ENCODE measurements at regions of chr3 and their contacts with region 1.

Region 1: GRCh38 chr3:8607234-8608040 is 37.2 kb downstream of the SSUH2 start:
- H3K4me3 Mint-ChIP-seq: no peak overlapping the region
- H3K27ac Mint-ChIP-seq: no peak overlapping the region
- H3K4me1 Mint-ChIP-seq: peaks cover 24% of the 10 kb centered on the region
- H3K27me3 Mint-ChIP-seq: peaks cover 18% of the 10 kb centered on the region

Region 2: DNA sequence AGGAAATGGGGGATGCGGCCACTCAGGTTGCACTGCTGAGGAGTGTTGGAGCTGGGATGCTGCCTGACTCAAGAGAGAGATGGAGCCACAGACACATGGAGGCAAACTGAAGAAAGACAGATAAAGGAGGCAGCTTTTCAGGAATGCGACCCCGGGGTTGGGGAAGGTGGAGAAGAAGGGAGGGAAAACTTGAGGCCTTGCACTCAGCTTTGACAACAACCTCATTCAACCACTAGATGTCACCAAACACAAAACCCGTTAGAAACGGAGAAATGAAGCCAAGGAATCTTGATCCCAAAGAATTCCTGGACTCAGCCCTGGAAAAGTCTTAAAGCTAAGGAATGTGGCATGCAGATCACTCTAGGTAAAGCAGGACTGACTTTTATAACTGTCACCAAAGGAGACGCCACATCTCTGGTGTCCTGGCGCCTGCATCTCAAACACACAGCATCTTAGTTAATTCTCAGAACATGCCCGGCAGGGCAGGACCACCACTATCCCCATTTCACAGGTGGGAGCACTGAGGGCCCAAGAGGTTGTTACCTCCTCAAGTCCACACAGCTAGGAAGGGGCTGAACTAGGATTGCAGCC is 165.4 kb before region 1 on chr3:
- intact Hi-C with region 1: loop called (anchors 1 kb)
- H3K4me3 Mint-ChIP-seq: no peak overlapping the region
- H3K27ac Mint-ChIP-seq: no peak overlapping the region
- H3K4me1 Mint-ChIP-seq: no peaks in the 10 kb centered on the region
- H3K27me3 Mint-ChIP-seq: peaks cover 2% of the 10 kb centered on the region

Region 3: DNA sequence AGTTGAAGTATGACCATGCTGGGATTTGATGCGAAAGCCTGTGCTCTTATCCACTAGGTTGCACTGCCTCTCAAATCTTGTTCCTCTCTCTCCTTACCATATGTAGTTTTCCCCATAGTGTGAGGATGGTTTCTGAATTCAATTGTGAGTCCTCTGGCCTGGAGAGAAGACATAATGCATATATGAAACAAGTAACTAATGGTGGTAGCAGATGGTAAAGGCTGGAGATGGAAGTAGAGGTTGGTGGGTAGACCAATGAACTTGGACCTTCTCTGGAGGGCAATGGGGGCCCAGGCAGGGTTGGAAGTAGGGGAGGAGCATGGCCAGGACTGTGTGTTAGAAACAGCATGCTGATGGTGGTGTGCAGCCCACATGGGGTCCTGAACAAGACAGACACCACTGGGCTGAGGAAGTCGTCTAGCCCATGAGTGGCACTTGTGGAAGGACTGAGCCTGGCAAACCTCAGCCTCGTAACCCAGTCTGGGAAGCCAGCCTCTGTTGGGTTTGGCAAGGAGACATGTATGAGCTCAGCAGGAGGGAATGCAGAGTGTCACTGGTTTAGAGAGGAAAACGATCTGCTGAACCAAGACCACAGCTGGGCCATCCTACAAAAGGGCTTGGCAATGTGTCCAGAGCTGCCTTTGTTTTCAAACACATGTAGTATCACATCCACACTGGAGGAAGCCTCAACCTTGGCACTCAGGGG is 124.3 kb before region 1 on chr3:
- intact Hi-C with region 1: loop called (anchors 2 kb)
- H3K4me3 Mint-ChIP-seq: no peak overlapping the region
- H3K27ac Mint-ChIP-seq: no peak overlapping the region
- H3K4me1 Mint-ChIP-seq: peaks cover 7% of the 10 kb centered on the region
- H3K27me3 Mint-ChIP-seq: peaks cover 3% of the 10 kb centered on the region

Region 4: GRCh38 chr3:8739757-8740491 is 132.5 kb after region 1 on chr3:
- intact Hi-C with region 1: no loop called
- H3K4me3 Mint-ChIP-seq: no peak overlapping the region
- H3K27ac Mint-ChIP-seq: no peak overlapping the region
- H3K4me1 Mint-ChIP-seq: peaks cover 5% of the 10 kb centered on the region
- H3K27me3 Mint-ChIP-seq: peaks cover 6% of the 10 kb centered on the region

Measured in dendritic cell treated with granulocyte-macrophage colony-stimulating factor and Interleukin-4, amounts not matched to agents 40 ng/mL and 50 ng/mL, for 4 days (primary cell).